ENCODE measurements at regions of chr4 and their contacts with region 1.

Region 1: GRCh38 chr4:185608185-185608584 is 72.9 kb upstream of the PDLIM3 start:
- DNase-seq: no peak
- H3K4me3 Mint-ChIP-seq: no peak overlapping the region
- H3K27ac Mint-ChIP-seq: no peak overlapping the region
- H3K4me1 Mint-ChIP-seq: peaks cover 2% of the 10 kb centered on the region
- H3K27me3 Mint-ChIP-seq: peaks cover 4% of the 10 kb centered on the region

Region 2: DNA sequence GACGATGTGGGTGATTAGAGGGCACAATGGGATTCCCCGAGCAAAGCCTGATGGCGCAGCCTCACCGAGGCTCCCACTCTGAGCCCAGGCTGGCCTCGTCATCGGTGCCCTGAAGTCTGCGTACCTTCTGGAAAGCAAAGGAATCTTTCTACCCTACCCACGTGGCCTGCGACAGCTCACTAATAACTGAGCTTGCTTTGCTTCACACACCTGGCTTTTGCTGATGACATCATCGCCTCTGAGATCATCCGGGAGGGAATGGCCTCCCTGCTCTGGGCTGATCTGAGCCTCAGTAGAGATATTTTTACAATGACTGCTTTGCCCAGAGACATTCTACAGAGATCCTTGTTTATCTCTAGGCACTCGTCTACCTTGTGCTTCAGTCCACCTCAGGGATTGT is 27.5 kb before region 1 on chr4:
- CTCF ChIA-PET with region 1: no interaction called
- intact Hi-C with region 1: no loop called
- DNase-seq: no peak
- H3K4me3 Mint-ChIP-seq: no peak overlapping the region
- H3K27ac Mint-ChIP-seq: no peak overlapping the region
- H3K4me1 Mint-ChIP-seq: no peaks in the 10 kb centered on the region
- H3K27me3 Mint-ChIP-seq: peaks cover 14% of the 10 kb centered on the region

Region 3: GRCh38 chr4:185597532-185598188 is 10.5 kb before region 1 on chr4:
- CTCF ChIA-PET with region 1: interaction called, 19 read pairs
- intact Hi-C with region 1: no loop called
- DNase-seq: peak; percentile 84
- H3K4me3 Mint-ChIP-seq: no peak overlapping the region
- H3K27ac Mint-ChIP-seq: no peak overlapping the region
- H3K4me1 Mint-ChIP-seq: no peaks in the 10 kb centered on the region
- H3K27me3 Mint-ChIP-seq: peaks cover 13% of the 10 kb centered on the region

Measured in activated naive CD4-positive, alpha-beta T cell treated with anti-CD3 and anti-CD28 coated beads for 36 hours (primary cell).